Right ventricle myocardium superior (tissue), 1 donor: ENCODE measurements at regions of chr6 and their contacts with region 1.

Region 1: GRCh38 chr6:154733012-154733625 is at the start of gene SCAF8:
- DNase-seq: peak; percentile 91
- ATAC-seq: peak; percentile 92
- total RNA-seq, gene SCAF8: 43.0 TPM

Region 2: DNA sequence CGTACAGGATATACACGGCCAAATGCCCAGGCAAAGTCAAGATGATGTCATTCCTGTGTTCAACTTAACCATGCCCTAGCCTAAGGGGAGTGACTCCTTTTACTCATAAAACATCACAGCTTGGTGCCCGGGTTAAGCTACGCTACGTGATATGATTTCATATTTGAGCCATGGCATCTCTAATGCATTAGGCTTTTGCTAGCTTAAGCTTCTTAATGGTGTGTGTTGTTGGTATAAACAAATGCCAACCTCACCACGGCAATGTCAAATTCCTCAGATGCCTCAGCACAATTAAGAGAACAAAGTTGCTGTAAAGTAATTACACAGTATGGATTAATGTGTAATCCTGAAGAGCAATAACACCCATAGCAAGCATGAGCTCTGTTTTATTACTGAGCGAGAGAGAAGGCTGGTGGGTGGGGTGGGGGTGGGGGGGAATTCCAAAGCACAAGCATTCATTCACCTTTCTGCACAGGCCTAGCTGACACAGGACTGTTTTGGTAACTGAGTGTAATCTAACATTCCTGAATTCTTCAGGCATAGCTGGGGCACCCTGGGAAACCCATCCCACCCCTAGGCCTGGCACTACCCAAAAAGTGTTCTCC is 177.9 kb before region 1 on chr6:
- intact Hi-C with region 1: no loop called
- DNase-seq: no peak
- ATAC-seq: peak; percentile 65

Region 3: DNA sequence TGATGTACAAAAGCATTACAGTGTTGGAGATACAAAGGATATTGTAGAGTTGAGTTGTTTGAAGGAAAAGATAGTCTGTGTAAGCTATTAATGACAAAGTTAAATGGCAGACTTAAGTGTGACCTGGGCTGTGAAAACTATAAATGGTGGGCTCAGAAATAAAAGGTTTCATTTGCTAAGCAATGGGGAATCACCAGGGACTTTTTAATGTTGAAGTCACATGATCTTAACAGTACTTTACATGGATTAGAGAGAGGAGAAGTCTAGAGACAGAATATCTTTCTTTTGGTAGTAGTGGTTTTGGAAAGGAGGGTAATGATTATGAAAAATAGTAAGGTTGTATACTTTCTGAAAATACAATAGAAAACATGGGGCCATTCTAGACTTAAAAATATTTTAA is 67.2 kb after region 1 on chr6:
- intact Hi-C with region 1: loop called (anchors 5 kb)
- DNase-seq: no peak
- ATAC-seq: no peak

Region 4: DNA sequence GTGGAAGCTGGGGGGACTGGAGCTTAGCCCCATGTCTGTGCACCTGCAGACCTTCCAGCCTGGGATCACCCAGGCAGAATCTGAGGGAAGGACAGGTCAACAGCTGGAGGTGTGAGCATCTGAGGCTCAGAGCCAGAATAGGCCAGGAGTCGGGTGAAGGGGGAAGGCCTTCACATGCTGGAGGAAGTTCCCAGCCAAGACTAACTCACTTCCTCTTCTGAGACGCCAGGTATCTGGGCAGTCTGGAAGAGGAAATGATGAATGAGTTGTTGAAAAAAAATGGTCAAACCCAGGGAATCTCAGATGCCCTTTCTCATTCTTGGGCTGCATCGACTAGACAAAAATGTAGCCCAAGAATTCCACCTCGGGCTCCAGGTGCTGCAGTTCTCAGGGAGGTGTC is 188.4 kb after region 1 on chr6:
- intact Hi-C with region 1: no loop called
- DNase-seq: no peak
- ATAC-seq: no peak